Esophagus muscularis mucosa (tissue), 4 donors: ENCODE measurements at regions of chr20 and their contacts with region 1.

Region 1: GRCh38 chr20:18507218-18508021 is at the start of gene SEC23B:
- DNase-seq: peak; percentile 99
- H3K4me3 ChIP-seq: peak within 1 kb of the TSS; percentile 69 to 89 (median 84)
- H3K27ac ChIP-seq: peak within 1 kb of the TSS; percentile 89 to 96 (median 96)
- H3K4me1 ChIP-seq: peaks cover 14 to 20% (median 18%) of the 10 kb centered on the region in 4 donors
- H3K27me3 ChIP-seq: peaks cover 0 to 24% (median 0%) of the 10 kb centered on the region in 4 donors
- CTCF ChIP-seq: no peak
- EP300 ChIP-seq: no peak
- POLR2A ChIP-seq: peak; percentile 38
- total RNA-seq, gene SEC23B: 14.1 to 21.0 (median 18.7) TPM

Region 2: GRCh38 chr20:18466894-18467730 is 40.3 kb before region 1 on chr20 and contains the starts of genes DZANK1 and POLR3F:
- intact Hi-C with region 1: loop called (anchors 5 kb)
- DNase-seq: peak; percentile 98
- H3K4me3 ChIP-seq: peak within 1 kb of the TSS; percentile 68 to 90 (median 81)
- H3K27ac ChIP-seq: peak within 1 kb of the TSS; percentile 73 to 82 (median 80)
- H3K4me1 ChIP-seq: peaks cover 14 to 28% (median 20%) of the 10 kb centered on the region in 4 donors
- H3K27me3 ChIP-seq: no peaks in the 10 kb centered on the region
- CTCF ChIP-seq: peak in 1 of 3 experiments; percentile 24
- EP300 ChIP-seq: no peak
- POLR2A ChIP-seq: no peak
- total RNA-seq, gene DZANK1: 1.3 to 2.1 (median 1.4) TPM
- total RNA-seq, gene POLR3F: 9.1 to 13.3 (median 11.0) TPM

Region 3: GRCh38 chr20:18566892-18567742 is 59.7 kb after region 1 on chr20 and contains the start of gene SMIM26:
- intact Hi-C with region 1: loop called (anchors 5 kb)
- DNase-seq: peak; percentile 97
- H3K4me3 ChIP-seq: peak within 1 kb of the TSS; percentile 61 to 74 (median 68)
- H3K27ac ChIP-seq: peak within 1 kb of the TSS; percentile 80 to 92 (median 83)
- H3K4me1 ChIP-seq: peaks cover 4 to 21% (median 18%) of the 10 kb centered on the region in 4 donors
- H3K27me3 ChIP-seq: no peaks in the 10 kb centered on the region
- CTCF ChIP-seq: no peak
- EP300 ChIP-seq: no peak
- POLR2A ChIP-seq: no peak
- total RNA-seq, gene SMIM26: 74.4 to 165 (median 121) TPM